ENCODE measurements at regions of chr2 and their contacts with region 1.

Region 1: GRCh38 chr2:172674034-172674967 is 61.3 kb upstream of the RAPGEF4 start:
- DNase-seq: peak; percentile 64
- CTCF ChIP-seq: peak; percentile 61

Region 2: DNA sequence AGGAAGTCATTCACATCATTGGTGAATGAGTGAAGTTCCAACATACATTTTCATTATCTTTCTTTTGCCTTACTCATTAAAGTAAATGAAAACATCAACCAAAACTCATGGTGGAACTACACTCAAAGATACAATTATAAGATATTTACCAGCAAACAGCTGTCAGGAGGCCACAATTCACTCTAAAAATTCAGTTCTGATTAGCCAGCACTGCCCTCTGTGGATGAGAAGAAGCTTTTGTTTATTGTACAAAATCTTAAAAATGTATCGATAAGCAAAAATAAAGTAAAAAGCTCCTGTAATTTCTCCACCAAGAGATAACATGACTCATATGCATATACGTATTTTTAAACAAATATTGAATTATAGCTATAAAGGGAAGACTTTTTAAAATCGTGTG is 12.2 kb before region 1 on chr2:
- CTCF ChIA-PET with region 1: interaction called, 15 read pairs
- POLR2A ChIA-PET with region 1: no interaction called
- DNase-seq: no peak
- CTCF ChIP-seq: no peak